ENCODE measurements at regions of chr19 and their contacts with region 1.

Region 1: DNA sequence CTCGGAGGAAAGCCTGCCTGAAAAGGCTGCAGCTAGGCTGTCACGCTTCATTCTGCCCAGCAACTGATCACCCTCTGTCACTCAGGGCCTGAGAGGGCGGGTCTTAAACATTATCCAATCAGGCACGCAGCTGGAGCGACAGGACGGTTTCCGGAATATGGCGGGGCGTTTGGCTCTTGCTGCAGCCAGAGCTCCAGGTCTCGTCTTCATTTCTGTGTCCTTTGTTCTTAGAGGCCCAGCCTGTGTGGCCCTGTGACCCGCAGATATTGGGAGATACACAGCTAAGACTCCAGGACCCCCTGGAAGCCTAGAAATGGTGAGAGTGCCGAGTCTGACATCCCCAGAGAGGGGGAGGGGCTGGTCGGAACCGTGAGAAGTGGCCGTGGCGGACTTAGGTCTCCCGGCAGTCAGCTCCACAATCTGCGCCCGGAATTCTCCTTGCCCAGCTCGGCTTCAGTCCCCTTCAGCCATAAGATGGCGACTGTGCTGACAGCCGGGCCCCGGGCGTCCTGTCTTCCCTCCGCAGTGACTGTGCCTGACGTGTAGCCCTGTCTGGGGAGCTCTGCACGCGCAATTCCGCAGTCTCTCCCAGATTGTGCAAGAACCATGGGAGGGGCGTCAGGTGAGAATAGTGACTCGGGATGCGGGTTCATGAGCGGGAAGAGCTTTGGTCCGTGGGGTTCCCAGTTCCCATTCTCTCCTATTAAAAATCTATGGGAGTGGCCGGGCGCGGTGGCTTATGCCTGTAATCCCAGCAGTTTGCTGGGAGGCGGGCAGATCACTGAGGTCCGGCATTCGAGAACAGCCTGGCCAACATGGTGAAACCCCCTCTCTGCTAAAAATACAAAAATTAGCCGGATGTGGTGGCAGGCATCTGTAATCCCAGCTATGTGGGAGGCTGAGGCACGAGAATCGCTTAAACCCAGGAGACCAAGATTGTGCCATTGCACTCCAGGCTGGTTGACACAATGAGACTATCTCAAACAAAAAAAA is at the start of gene ZNF429:
- DNase-seq: peak; percentile 79 to 96 (median 88)
- ATAC-seq: peak; percentile 98
- H3K4me3 ChIP-seq: peak within 1 kb of the TSS; percentile 70
- H3K4me3 Mint-ChIP-seq: peak within 1 kb of the TSS; percentile 100
- H3K27ac ChIP-seq: peak within 1 kb of the TSS; percentile 93 to 94
- H3K27ac Mint-ChIP-seq: peak within 1 kb of the TSS; percentile 100
- H3K4me1 ChIP-seq: peaks cover 21% of the 10 kb centered on the region
- H3K4me1 Mint-ChIP-seq: peaks cover 54% of the 10 kb centered on the region
- H3K27me3 ChIP-seq: no peaks in the 10 kb centered on the region
- H3K27me3 Mint-ChIP-seq: no peaks in the 10 kb centered on the region
- CTCF ChIP-seq: no peak
- total RNA-seq, gene ZNF429: 8.0 to 9.2 TPM

Region 2: DNA sequence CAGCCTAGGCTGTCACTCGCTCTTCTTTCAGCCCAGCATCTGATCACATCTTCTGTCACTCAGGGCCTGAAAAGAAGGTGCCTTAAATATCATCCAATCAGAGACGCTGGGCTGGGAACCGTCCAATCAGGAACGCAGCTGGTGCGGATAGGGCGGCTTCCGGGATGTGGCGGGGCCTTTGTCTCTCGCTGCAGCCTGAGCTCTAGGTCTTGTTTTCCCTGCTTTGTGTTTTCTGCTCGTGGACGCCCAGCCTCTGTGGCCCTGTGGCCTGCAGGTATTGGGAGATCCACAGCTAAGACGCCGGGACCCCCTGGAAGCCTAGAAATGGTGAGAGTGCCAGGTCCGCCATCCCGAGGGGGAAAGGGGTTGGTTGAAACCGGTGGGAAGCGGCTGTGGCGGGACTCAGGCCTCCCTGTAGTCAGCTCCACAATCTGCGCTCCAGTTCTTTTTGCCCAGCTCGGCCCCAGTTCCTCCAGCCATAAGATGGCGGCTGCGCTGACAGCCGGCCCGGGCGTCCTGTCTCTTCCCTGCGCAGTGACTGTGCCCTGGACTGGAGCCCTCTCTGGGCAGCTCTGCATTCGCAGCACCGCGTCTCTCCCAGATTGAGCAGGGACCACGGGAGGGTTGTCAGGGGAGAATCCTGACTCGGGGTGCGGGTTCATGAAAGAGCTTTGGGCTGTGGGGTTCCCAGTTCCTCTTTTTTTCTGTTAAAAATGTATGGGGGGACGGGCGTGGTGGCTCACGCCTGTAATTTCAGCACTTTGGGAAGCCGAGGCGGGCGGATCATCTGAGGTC is 582.5 kb before region 1 on chr19 and contains the start of gene ZNF85:
- CTCF ChIA-PET with region 1: no interaction called
- POLR2A ChIA-PET with region 1: interaction called, 10 read pairs
- intact Hi-C with region 1: loop called in 1 of 2 experiments (anchors 10 kb)
- DNase-seq: peak; percentile 79 to 97 (median 86)
- ATAC-seq: peak; percentile 99
- H3K4me3 ChIP-seq: peak within 1 kb of the TSS; percentile 83
- H3K4me3 Mint-ChIP-seq: peak within 1 kb of the TSS; percentile 96
- H3K27ac ChIP-seq: peak within 1 kb of the TSS; percentile 44 to 75
- H3K27ac Mint-ChIP-seq: peak within 1 kb of the TSS; percentile 89
- H3K4me1 ChIP-seq: peaks cover 12% of the 10 kb centered on the region
- H3K4me1 Mint-ChIP-seq: peaks cover 26% of the 10 kb centered on the region
- H3K27me3 ChIP-seq: no peaks in the 10 kb centered on the region
- H3K27me3 Mint-ChIP-seq: no peaks in the 10 kb centered on the region
- CTCF ChIP-seq: no peak
- total RNA-seq, gene ZNF85: 3.4 to 4.7 TPM

Region 3: GRCh38 chr19:21328885-21329605 is 176.7 kb before region 1 on chr19 and contains the start of gene ZNF708:
- CTCF ChIA-PET with region 1: no interaction called
- POLR2A ChIA-PET with region 1: interaction called, 46 read pairs
- intact Hi-C with region 1: loop called in 1 of 2 experiments (anchors 10 kb)
- DNase-seq: peak; percentile 41 to 96 (median 59)
- ATAC-seq: peak; percentile 91
- H3K4me3 ChIP-seq: peak within 1 kb of the TSS; percentile 99
- H3K4me3 Mint-ChIP-seq: peak within 1 kb of the TSS; percentile 96
- H3K27ac ChIP-seq: peak within 1 kb of the TSS; percentile 83 to 99
- H3K27ac Mint-ChIP-seq: peak within 1 kb of the TSS; percentile 98
- H3K4me1 ChIP-seq: peaks cover 22% of the 10 kb centered on the region
- H3K4me1 Mint-ChIP-seq: peaks cover 50% of the 10 kb centered on the region
- H3K27me3 ChIP-seq: no peaks in the 10 kb centered on the region
- H3K27me3 Mint-ChIP-seq: no peaks in the 10 kb centered on the region
- CTCF ChIP-seq: no peak
- total RNA-seq, gene ZNF708: 15.5 to 16.4 TPM

Region 4: GRCh38 chr19:21482863-21483276 is 22.9 kb before region 1 on chr19:
- CTCF ChIA-PET with region 1: interaction called, 14 read pairs
- POLR2A ChIA-PET with region 1: interaction called, 3 read pairs
- intact Hi-C with region 1: no loop called
- DNase-seq: peak; percentile 49 to 86 (median 60)
- ATAC-seq: peak; percentile 79
- H3K4me3 ChIP-seq: peak overlapping the region; percentile 46
- H3K4me3 Mint-ChIP-seq: no peak overlapping the region
- H3K27ac ChIP-seq: no peak overlapping the region
- H3K27ac Mint-ChIP-seq: no peak overlapping the region
- H3K4me1 ChIP-seq: no peaks in the 10 kb centered on the region
- H3K4me1 Mint-ChIP-seq: no peaks in the 10 kb centered on the region
- H3K27me3 ChIP-seq: no peaks in the 10 kb centered on the region
- H3K27me3 Mint-ChIP-seq: no peaks in the 10 kb centered on the region
- CTCF ChIP-seq: peak; percentile 82

Region 5: DNA sequence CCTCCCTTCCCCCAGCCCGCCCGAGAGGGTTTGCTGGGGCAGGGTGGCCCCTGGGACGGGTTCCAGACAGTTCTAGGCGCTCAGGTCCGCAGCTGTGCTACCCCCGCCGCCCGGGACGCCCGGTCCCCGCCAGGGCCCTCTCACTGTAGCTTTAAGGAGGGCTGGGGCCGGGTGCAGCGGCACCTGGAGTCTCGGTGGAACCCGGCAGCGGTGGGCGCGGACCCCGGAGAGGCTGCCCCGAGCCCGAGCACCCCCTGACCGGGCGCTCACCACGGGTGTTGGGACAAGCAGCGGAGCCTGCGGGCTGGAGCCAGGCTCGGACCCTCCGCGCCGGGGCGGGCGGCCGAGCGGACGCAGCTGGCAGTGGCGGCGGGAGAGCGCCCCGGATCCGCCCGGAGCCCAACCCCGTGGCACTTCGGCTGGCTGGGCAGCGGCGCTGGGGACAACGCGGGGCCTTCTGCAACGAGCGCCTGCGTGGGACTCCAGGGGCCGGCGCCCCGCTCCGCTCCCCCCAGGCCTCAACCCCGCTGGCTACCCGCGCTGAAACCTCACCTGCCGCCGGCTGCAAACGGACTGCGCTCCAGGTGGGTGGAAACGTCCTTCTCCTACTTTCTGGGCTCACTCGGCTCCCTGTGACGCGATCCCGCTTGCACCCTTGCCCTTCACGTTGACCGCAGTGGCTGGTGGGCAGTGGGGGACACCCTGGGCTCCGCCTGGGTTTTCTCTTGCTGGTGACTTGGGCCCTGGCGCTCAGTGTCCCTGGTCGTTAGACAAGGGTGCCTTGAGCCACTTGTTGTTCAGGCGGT is 80.8 kb after region 1 on chr19:
- CTCF ChIA-PET with region 1: no interaction called
- POLR2A ChIA-PET with region 1: interaction called, 58 read pairs
- intact Hi-C with region 1: no loop called
- DNase-seq: peak in 5 of 14 experiments; percentile 5 to 58 (median 35)
- ATAC-seq: peak; percentile 65
- H3K4me3 ChIP-seq: peak overlapping the region; percentile 57
- H3K4me3 Mint-ChIP-seq: peak overlapping the region; percentile 87
- H3K27ac ChIP-seq: no peak overlapping the region
- H3K27ac Mint-ChIP-seq: peak overlapping the region; percentile 55
- H3K4me1 ChIP-seq: peaks cover 4% of the 10 kb centered on the region
- H3K4me1 Mint-ChIP-seq: peaks cover 49% of the 10 kb centered on the region
- H3K27me3 ChIP-seq: no peaks in the 10 kb centered on the region
- H3K27me3 Mint-ChIP-seq: no peaks in the 10 kb centered on the region
- CTCF ChIP-seq: no peak

Region 6: GRCh38 chr19:21835810-21836444 is 330.2 kb after region 1 on chr19 and contains the start of gene ZNF43:
- CTCF ChIA-PET with region 1: no interaction called
- POLR2A ChIA-PET with region 1: interaction called, 24 read pairs
- intact Hi-C with region 1: loop called in 1 of 2 experiments (anchors 10 kb)
- DNase-seq: peak; percentile 87 to 97 (median 91)
- ATAC-seq: peak; percentile 98
- H3K4me3 ChIP-seq: peak within 1 kb of the TSS; percentile 81
- H3K4me3 Mint-ChIP-seq: peak within 1 kb of the TSS; percentile 97
- H3K27ac ChIP-seq: peak within 1 kb of the TSS; percentile 82 to 83
- H3K27ac Mint-ChIP-seq: peak within 1 kb of the TSS; percentile 94
- H3K4me1 ChIP-seq: peaks cover 14% of the 10 kb centered on the region
- H3K4me1 Mint-ChIP-seq: peaks cover 33% of the 10 kb centered on the region
- H3K27me3 ChIP-seq: no peaks in the 10 kb centered on the region
- H3K27me3 Mint-ChIP-seq: no peaks in the 10 kb centered on the region
- CTCF ChIP-seq: no peak
- total RNA-seq, gene ZNF43: 26.1 to 30.2 TPM

Measured in CD4-positive, alpha-beta T cell (primary cell).